ENCODE measurements at regions of chr9 and their contacts with region 1.

Region 1: DNA sequence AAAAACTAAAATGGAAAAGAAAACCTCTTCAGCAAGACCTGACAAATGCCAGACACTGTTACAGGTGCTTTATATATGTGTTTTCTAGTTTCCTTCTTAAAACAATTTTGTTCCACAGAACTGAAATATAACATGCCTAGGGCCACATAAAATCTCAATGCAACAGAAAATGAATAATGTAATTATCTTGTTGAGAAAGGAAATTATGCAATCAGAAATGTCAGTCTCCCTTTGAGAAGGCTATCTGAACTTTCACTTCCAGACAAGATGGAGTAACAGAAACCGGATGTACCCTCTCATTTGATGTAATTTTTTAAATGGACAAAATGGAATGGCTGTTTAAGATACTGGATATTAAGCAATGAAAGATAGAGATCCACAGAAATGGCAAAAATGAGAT is 79.2 kb downstream of the AGTPBP1 start:
- DNase-seq: no peak
- ATAC-seq: no peak
- H3K4me3 ChIP-seq: no peak overlapping the region
- H3K4me3 Mint-ChIP-seq: no peak overlapping the region
- H3K27ac ChIP-seq: no peak overlapping the region
- H3K27ac Mint-ChIP-seq: no peak overlapping the region
- H3K4me1 ChIP-seq: no peaks in the 10 kb centered on the region
- H3K4me1 Mint-ChIP-seq: no peaks in the 10 kb centered on the region
- H3K27me3 ChIP-seq: no peaks in the 10 kb centered on the region
- H3K27me3 Mint-ChIP-seq: no peaks in the 10 kb centered on the region

Region 2: GRCh38 chr9:85676790-85677189 is 14.2 kb after region 1 on chr9:
- CTCF ChIA-PET with region 1: interaction called in 1 of 2 experiments, 12 read pairs
- POLR2A ChIA-PET with region 1: interaction called, 3 to 5 read pairs
- DNase-seq: no peak
- ATAC-seq: no peak
- H3K4me3 ChIP-seq: no peak overlapping the region
- H3K4me3 Mint-ChIP-seq: no peak overlapping the region
- H3K27ac ChIP-seq: no peak overlapping the region
- H3K27ac Mint-ChIP-seq: no peak overlapping the region
- H3K4me1 ChIP-seq: no peaks in the 10 kb centered on the region
- H3K4me1 Mint-ChIP-seq: no peaks in the 10 kb centered on the region
- H3K27me3 ChIP-seq: no peaks in the 10 kb centered on the region
- H3K27me3 Mint-ChIP-seq: no peaks in the 10 kb centered on the region